HepG2 (cell line): ENCODE measurements at regions of chr6 and their contacts with region 1.

Region 1: GRCh38 chr6:13336553-13336952 is 8.2 kb upstream of the TBC1D7 start:
- DNase-seq: peak; percentile 69
- ATAC-seq: peak; percentile 77
- H3K4me3 ChIP-seq: no peak overlapping the region
- H3K27ac ChIP-seq: no peak overlapping the region
- H3K4me1 ChIP-seq: peaks cover 14% of the 10 kb centered on the region
- H3K27me3 ChIP-seq: peaks cover 0 to 8% of the 10 kb centered on the region in 2 experiments; a peak in 3 of 5 replicates
- CTCF ChIP-seq: peak; percentile 96
- EP300 ChIP-seq: no peak
- POLR2A ChIP-seq: no peak
- RAD21 ChIP-seq: peak; percentile 95

Region 2: GRCh38 chr6:13044373-13045239 is 291.9 kb before region 1 on chr6:
- CTCF ChIA-PET with region 1: no interaction called
- POLR2A ChIA-PET with region 1: no interaction called
- in situ Hi-C with region 1: no loop called
- intact Hi-C with region 1: no loop called
- DNase-seq: peak; percentile 5
- ATAC-seq: no peak; the same call in 2 of the 3 replicates
- H3K4me3 ChIP-seq: no peak overlapping the region
- H3K27ac ChIP-seq: no peak overlapping the region
- H3K4me1 ChIP-seq: no peaks in the 10 kb centered on the region
- H3K27me3 ChIP-seq: no peaks in the 10 kb centered on the region
- CTCF ChIP-seq: no peak
- EP300 ChIP-seq: no peak
- POLR2A ChIP-seq: no peak
- RAD21 ChIP-seq: no peak

Region 3: GRCh38 chr6:13194852-13195251 is 141.7 kb before region 1 on chr6:
- CTCF ChIA-PET with region 1: interaction called, 26 read pairs
- POLR2A ChIA-PET with region 1: no interaction called
- in situ Hi-C with region 1: loop called (anchors 10 kb)
- intact Hi-C with region 1: loop called (anchors 1 kb)
- DNase-seq: peak; percentile 64
- ATAC-seq: peak; percentile 87
- H3K4me3 ChIP-seq: no peak overlapping the region
- H3K27ac ChIP-seq: no peak overlapping the region
- H3K4me1 ChIP-seq: peaks cover 2% of the 10 kb centered on the region; the same call in 1 of the 2 replicates
- H3K27me3 ChIP-seq: 0 out of 5 replicates have a peak, but pooled peaks cover 0 to 12% of the 10 kb centered on the region in 2 experiments
- CTCF ChIP-seq: peak; percentile 79
- EP300 ChIP-seq: no peak
- POLR2A ChIP-seq: no peak
- RAD21 ChIP-seq: peak; percentile 63

Region 4: DNA sequence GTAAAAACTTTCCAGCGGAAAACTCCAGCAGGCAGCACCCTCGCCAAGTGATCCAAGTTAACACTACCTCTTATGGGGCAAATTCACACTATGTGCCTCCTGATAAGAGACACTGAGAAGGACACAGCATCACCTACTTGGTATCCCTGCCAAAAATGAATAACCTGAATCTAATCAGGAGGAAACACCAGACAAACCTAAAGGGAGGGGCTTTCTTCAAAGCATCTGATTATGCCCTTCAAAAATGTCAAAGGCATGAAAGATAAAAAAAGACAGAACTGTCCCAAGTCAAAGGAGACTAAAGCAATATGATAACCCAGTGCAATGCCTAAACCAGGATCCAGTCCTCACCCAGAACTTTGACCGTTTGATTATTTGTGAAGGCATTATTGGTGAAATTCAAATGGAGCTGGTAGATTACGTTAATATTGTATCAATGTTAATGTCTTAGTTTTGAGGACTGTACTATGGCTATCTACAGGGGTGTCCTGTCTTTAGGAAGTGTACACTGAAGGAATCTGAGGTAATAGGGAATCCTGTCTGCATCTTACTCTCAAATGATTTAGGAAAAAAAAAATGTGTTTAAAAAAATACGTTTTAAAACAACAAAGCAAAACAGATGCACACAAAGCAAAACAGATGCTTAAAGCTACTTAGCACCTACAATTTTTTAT is 16.5 kb before region 1 on chr6:
- CTCF ChIA-PET with region 1: no interaction called
- POLR2A ChIA-PET with region 1: no interaction called
- in situ Hi-C with region 1: no loop called
- intact Hi-C with region 1: no loop called
- DNase-seq: no peak
- ATAC-seq: no peak
- H3K4me3 ChIP-seq: no peak overlapping the region
- H3K27ac ChIP-seq: no peak overlapping the region
- H3K4me1 ChIP-seq: no peaks in the 10 kb centered on the region
- H3K27me3 ChIP-seq: no peaks in the 10 kb centered on the region
- CTCF ChIP-seq: no peak
- EP300 ChIP-seq: no peak
- POLR2A ChIP-seq: no peak
- RAD21 ChIP-seq: no peak

Region 5: GRCh38 chr6:13407709-13408695 is 71.4 kb after region 1 on chr6:
- CTCF ChIA-PET with region 1: no interaction called
- POLR2A ChIA-PET with region 1: no interaction called
- in situ Hi-C with region 1: no loop called
- intact Hi-C with region 1: loop called (anchors 2 kb)
- DNase-seq: peak; percentile 100
- ATAC-seq: peak; percentile 82
- H3K4me3 ChIP-seq: peak overlapping the region; percentile 8 to 23 (median 19); a peak in 4 of 6 replicates
- H3K27ac ChIP-seq: peak overlapping the region; percentile 78
- H3K4me1 ChIP-seq: peaks cover 74% of the 10 kb centered on the region
- H3K27me3 ChIP-seq: no peaks in the 10 kb centered on the region
- CTCF ChIP-seq: no peak
- EP300 ChIP-seq: peak; percentile 91 to 96
- POLR2A ChIP-seq: peak in 1 of 2 experiments; percentile 39; a peak in 1 of 4 replicates
- RAD21 ChIP-seq: peak; percentile 12; the same call in 1 of the 2 replicates

Region 6: GRCh38 chr6:13487122-13488014 is 150.8 kb after region 1 on chr6 and contains the start of gene GFOD1:
- CTCF ChIA-PET with region 1: no interaction called
- POLR2A ChIA-PET with region 1: no interaction called
- in situ Hi-C with region 1: no loop called
- intact Hi-C with region 1: loop called (anchors 1 kb)
- DNase-seq: peak; percentile 63
- ATAC-seq: peak; percentile 80
- H3K4me3 ChIP-seq: peak within 1 kb of the TSS; percentile 69 to 82 (median 80)
- H3K27ac ChIP-seq: peak within 1 kb of the TSS; percentile 25
- H3K4me1 ChIP-seq: peaks cover 47% of the 10 kb centered on the region
- H3K27me3 ChIP-seq: no peaks in the 10 kb centered on the region; a peak in 1 of 5 replicates
- CTCF ChIP-seq: no peak
- EP300 ChIP-seq: no peak
- POLR2A ChIP-seq: peak; percentile 44 to 70; a peak in 3 of 4 replicates
- RAD21 ChIP-seq: peak; percentile 76
- total RNA-seq, gene GFOD1: 6.4 TPM in 2 replicates

Region 7: GRCh38 chr6:13538084-13538483 is 201.5 kb after region 1 on chr6:
- CTCF ChIA-PET with region 1: interaction called, 37 read pairs
- POLR2A ChIA-PET with region 1: no interaction called
- in situ Hi-C with region 1: loop called (anchors 5 kb)
- intact Hi-C with region 1: loop called (anchors 1 kb)
- DNase-seq: peak; percentile 55
- ATAC-seq: peak; percentile 73
- H3K4me3 ChIP-seq: no peak overlapping the region
- H3K27ac ChIP-seq: no peak overlapping the region
- H3K4me1 ChIP-seq: no peaks in the 10 kb centered on the region
- H3K27me3 ChIP-seq: peaks cover 0 to 12% of the 10 kb centered on the region in 2 experiments
- CTCF ChIP-seq: peak; percentile 53
- EP300 ChIP-seq: no peak
- POLR2A ChIP-seq: no peak
- RAD21 ChIP-seq: peak; percentile 69

Region 8: GRCh38 chr6:13614926-13615798 is 278.6 kb after region 1 on chr6 and contains the start of gene NOL7:
- CTCF ChIA-PET with region 1: no interaction called
- POLR2A ChIA-PET with region 1: no interaction called
- in situ Hi-C with region 1: no loop called
- intact Hi-C with region 1: loop called (anchors 2 kb)
- DNase-seq: peak; percentile 97
- ATAC-seq: peak; percentile 92
- H3K4me3 ChIP-seq: peak within 1 kb of the TSS; percentile 89 to 97 (median 93)
- H3K27ac ChIP-seq: peak within 1 kb of the TSS; percentile 91
- H3K4me1 ChIP-seq: peaks cover 35% of the 10 kb centered on the region
- H3K27me3 ChIP-seq: no peaks in the 10 kb centered on the region; a peak in 1 of 5 replicates
- CTCF ChIP-seq: peak; percentile 100
- EP300 ChIP-seq: peak in 1 of 2 experiments; percentile 11; a peak in 1 of 4 replicates
- POLR2A ChIP-seq: peak; percentile 93 to 96
- RAD21 ChIP-seq: peak; percentile 55; the same call in 1 of the 2 replicates
- total RNA-seq, gene NOL7: 186 and 215 TPM in 2 replicates